ENCODE measurements at regions of chr18 and their contacts with region 1.

Region 1: GRCh38 chr18:35040988-35041814 is at the start of gene MAPRE2:
- DNase-seq: peak; percentile 99
- H3K4me3 Mint-ChIP-seq: peak within 1 kb of the TSS; percentile 98
- H3K27ac Mint-ChIP-seq: peak within 1 kb of the TSS; percentile 94
- H3K4me1 Mint-ChIP-seq: peaks cover 63% of the 10 kb centered on the region
- H3K27me3 Mint-ChIP-seq: no peaks in the 10 kb centered on the region
- total RNA-seq, gene MAPRE2: 46.4 to 46.5 TPM

Region 2: GRCh38 chr18:34707670-34708069 is 333.5 kb before region 1 on chr18:
- CTCF ChIA-PET with region 1: no interaction called
- POLR2A ChIA-PET with region 1: no interaction called
- intact Hi-C with region 1: no loop called
- DNase-seq: no peak
- H3K4me3 Mint-ChIP-seq: no peak overlapping the region
- H3K27ac Mint-ChIP-seq: no peak overlapping the region
- H3K4me1 Mint-ChIP-seq: no peaks in the 10 kb centered on the region
- H3K27me3 Mint-ChIP-seq: peaks cover 8% of the 10 kb centered on the region

Region 3: DNA sequence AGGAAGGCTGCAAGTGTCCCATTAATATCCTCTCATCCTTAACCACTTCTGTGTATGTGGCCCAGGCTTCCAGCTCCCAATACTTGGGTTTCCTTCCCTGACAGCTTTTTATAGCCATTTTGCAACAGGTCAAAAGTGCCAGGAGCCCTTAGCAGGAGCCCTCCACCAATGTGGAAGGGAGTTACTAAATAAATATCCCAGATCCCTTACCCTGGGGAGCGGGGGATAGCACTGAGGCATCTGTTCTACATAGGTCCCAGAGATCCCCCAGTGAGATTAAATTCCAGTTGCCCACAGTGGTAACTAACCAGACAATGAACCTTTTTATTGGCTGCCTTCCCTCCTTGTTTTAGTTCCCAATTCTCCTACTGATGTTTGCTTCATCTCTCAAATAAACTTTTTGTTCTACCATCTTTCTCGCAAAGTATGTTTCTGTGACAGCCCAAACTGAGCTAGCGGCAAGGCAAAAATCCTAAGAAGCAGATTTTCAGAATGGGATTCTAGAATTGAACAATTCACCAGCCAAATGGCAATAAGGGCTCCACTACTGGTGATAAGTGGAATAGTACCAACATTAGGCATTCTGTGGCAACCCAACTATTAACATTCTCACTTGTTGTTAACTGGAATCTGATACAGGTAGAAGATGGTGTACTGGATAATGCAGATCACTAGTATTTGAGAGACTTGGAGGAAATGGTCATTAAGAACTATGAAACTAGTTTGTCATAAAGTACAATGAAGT is 83.9 kb before region 1 on chr18:
- CTCF ChIA-PET with region 1: no interaction called
- POLR2A ChIA-PET with region 1: no interaction called
- intact Hi-C with region 1: no loop called
- DNase-seq: no peak
- H3K4me3 Mint-ChIP-seq: no peak overlapping the region
- H3K27ac Mint-ChIP-seq: no peak overlapping the region
- H3K4me1 Mint-ChIP-seq: no peaks in the 10 kb centered on the region
- H3K27me3 Mint-ChIP-seq: peaks cover 37% of the 10 kb centered on the region

Region 4: GRCh38 chr18:35029770-35030169 is 11.4 kb before region 1 on chr18:
- CTCF ChIA-PET with region 1: interaction called, 57 read pairs
- POLR2A ChIA-PET with region 1: interaction called, 46 read pairs
- intact Hi-C with region 1: loop called (anchors 1 kb)
- DNase-seq: no peak
- H3K4me3 Mint-ChIP-seq: peak overlapping the region; percentile 73
- H3K27ac Mint-ChIP-seq: peak overlapping the region; percentile 95
- H3K4me1 Mint-ChIP-seq: peaks cover 42% of the 10 kb centered on the region
- H3K27me3 Mint-ChIP-seq: no peaks in the 10 kb centered on the region

Region 5: DNA sequence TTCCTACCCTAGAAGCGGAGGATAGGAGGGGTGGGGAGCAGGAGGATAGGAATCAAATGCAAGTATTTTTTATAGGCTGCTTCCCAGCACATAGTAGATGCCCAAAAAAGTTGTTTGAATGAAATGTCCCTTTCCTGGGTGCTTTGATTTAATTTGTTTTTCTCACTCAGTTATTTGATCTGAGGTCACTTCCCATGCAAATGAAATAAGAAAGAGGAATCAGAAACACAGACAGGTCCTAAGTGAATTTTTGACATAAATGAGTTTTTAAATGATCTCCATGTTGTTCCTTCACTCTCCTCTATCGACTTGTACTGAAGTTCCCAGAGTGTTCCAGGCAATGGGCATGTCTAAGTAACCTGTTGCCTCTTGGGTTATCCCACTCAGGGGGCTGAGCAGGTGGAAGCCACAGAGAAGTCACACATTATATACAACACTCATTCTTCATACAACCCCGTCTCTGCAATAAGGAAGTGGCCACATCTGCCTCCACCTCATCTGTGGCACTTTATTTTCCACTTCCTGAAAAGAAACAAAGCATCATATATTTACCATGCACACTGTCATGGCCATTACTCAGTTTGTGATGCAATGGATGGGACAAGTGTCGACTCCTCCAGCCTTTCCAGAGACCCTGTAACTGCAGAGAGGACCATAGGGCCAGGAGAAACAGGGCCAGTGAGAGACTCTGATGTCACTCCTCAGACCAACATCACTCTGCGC is 117.7 kb after region 1 on chr18:
- CTCF ChIA-PET with region 1: no interaction called
- POLR2A ChIA-PET with region 1: interaction called, 3 read pairs
- intact Hi-C with region 1: loop called (anchors 1 kb)
- DNase-seq: peak; percentile 59
- H3K4me3 Mint-ChIP-seq: no peak overlapping the region
- H3K27ac Mint-ChIP-seq: peak overlapping the region; percentile 76
- H3K4me1 Mint-ChIP-seq: peaks cover 17% of the 10 kb centered on the region
- H3K27me3 Mint-ChIP-seq: peaks cover 2% of the 10 kb centered on the region

Region 6: GRCh38 chr18:35343936-35344735 is 302.9 kb after region 1 on chr18 and contains the start of gene ZNF24:
- CTCF ChIA-PET with region 1: no interaction called
- POLR2A ChIA-PET with region 1: interaction called, 4 read pairs
- intact Hi-C with region 1: loop called (anchors 1 kb)
- DNase-seq: peak; percentile 95
- H3K4me3 Mint-ChIP-seq: peak within 1 kb of the TSS; percentile 87
- H3K27ac Mint-ChIP-seq: peak within 1 kb of the TSS; percentile 96
- H3K4me1 Mint-ChIP-seq: peaks cover 45% of the 10 kb centered on the region
- H3K27me3 Mint-ChIP-seq: no peaks in the 10 kb centered on the region
- total RNA-seq, gene ZNF24: 40.6 to 48.6 TPM

Region 7: GRCh38 chr18:35497370-35498197 is 456.4 kb after region 1 on chr18 and contains the start of gene INO80C:
- CTCF ChIA-PET with region 1: no interaction called
- POLR2A ChIA-PET with region 1: no interaction called
- intact Hi-C with region 1: loop called (anchors 5 kb)
- DNase-seq: peak; percentile 95
- H3K4me3 Mint-ChIP-seq: peak within 1 kb of the TSS; percentile 95
- H3K27ac Mint-ChIP-seq: peak within 1 kb of the TSS; percentile 98
- H3K4me1 Mint-ChIP-seq: peaks cover 26% of the 10 kb centered on the region
- H3K27me3 Mint-ChIP-seq: no peaks in the 10 kb centered on the region
- total RNA-seq, gene INO80C: 25.3 to 28.5 TPM

Region 8: GRCh38 chr18:35972197-35973052 is 931.2 kb after region 1 on chr18 and contains the start of gene RMP24:
- CTCF ChIA-PET with region 1: no interaction called
- POLR2A ChIA-PET with region 1: no interaction called
- intact Hi-C with region 1: loop called (anchors 10 kb)
- DNase-seq: peak; percentile 97
- H3K4me3 Mint-ChIP-seq: peak within 1 kb of the TSS; percentile 95
- H3K27ac Mint-ChIP-seq: peak within 1 kb of the TSS; percentile 98
- H3K4me1 Mint-ChIP-seq: peaks cover 50% of the 10 kb centered on the region
- H3K27me3 Mint-ChIP-seq: no peaks in the 10 kb centered on the region